ENCODE measurements at regions of chr3 and their contacts with region 1.

Region 1: DNA sequence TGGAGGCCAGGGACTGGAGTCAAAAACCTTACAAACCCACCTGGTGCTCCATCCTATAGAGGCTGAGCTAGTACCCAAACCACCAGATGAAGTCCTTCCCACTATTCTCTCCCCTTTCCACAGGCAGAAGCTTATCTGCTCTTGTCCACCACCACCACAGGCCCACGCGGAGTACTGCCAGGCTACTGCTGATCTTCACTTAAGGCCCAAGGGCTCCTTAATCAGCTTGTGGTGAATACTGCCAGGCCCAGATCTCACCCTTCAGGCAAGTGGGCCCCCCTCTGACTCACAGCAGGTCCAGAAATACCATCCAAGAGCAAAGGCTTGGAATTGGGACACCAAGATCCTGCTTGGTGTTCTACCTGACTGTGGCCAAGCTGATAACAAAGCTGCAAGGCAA is 598.1 kb upstream of the CBLB start:
- DNase-seq: no peak
- ATAC-seq: no peak
- H3K4me3 ChIP-seq: no peak overlapping the region
- H3K27ac ChIP-seq: no peak overlapping the region
- H3K4me1 ChIP-seq: no peaks in the 10 kb centered on the region
- H3K27me3 ChIP-seq: no peaks in the 10 kb centered on the region
- CTCF ChIP-seq: no peak

Region 2: DNA sequence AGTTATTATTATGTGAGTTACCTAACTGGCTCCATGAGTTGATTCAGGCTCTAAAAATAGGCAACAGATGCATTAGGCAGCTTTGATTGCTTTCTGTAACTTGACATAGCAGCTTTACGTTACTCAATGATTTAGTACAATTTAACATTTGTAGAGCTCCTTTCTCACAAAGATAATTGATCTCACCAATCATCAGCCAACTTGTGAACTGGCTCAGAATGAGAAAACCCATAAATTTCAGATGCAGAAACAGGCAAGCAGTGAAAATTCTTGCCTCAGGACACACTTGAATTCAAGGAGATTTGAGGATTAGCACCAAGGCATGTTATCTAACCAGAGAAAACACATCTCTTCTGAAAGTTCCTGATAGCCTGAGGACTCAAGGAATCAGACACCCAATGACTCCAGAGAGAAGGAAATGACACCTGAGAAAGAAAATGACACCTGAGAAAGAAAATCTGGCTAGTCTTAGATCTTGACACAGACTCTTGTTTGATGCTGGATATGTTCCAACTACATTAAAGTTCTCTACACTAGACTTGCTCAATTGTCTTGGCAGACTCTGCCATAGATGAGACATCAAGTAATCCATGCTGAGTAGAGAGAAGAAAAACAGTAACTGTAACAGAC is 283.0 kb before region 1 on chr3:
- intact Hi-C with region 1: loop called in 1 of 2 experiments (anchors 10 kb)
- DNase-seq: no peak
- ATAC-seq: peak in 3 of 4 donors; percentile 83 to 92 (median 89)
- H3K4me3 ChIP-seq: no peak overlapping the region
- H3K27ac ChIP-seq: peak overlapping the region; percentile 81
- H3K4me1 ChIP-seq: peaks cover 17% of the 10 kb centered on the region
- H3K27me3 ChIP-seq: peaks cover 0 to 1% (median 0%) of the 10 kb centered on the region in 3 donors
- CTCF ChIP-seq: no peak

Region 3: DNA sequence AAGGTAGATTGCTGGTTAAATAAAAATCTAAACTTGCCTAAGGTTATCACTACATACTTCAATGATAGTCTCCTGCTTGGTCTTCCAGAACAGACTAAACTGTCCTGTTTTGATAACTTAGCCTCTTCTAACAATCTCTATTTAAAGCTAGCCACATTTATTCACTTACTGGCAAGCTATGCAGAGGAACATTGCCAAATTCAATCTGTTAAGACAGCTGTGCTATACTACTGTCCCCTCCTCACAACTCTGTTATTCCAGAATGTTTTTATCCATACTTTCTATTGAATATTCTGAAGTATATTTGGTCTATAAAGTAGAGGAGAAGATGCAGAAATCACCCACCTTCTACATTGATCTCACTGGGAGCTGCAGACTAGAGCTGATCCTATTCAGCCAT is 316.4 kb after region 1 on chr3:
- intact Hi-C with region 1: no loop called
- DNase-seq: no peak
- ATAC-seq: no peak
- H3K4me3 ChIP-seq: no peak overlapping the region
- H3K27ac ChIP-seq: no peak overlapping the region
- H3K4me1 ChIP-seq: no peaks in the 10 kb centered on the region
- H3K27me3 ChIP-seq: no peaks in the 10 kb centered on the region
- CTCF ChIP-seq: no peak

Measured in psoas muscle (tissue), 8 donors.